GM12878 (cell line): ENCODE measurements at regions of chr15 and their contacts with region 1.

Region 1: DNA sequence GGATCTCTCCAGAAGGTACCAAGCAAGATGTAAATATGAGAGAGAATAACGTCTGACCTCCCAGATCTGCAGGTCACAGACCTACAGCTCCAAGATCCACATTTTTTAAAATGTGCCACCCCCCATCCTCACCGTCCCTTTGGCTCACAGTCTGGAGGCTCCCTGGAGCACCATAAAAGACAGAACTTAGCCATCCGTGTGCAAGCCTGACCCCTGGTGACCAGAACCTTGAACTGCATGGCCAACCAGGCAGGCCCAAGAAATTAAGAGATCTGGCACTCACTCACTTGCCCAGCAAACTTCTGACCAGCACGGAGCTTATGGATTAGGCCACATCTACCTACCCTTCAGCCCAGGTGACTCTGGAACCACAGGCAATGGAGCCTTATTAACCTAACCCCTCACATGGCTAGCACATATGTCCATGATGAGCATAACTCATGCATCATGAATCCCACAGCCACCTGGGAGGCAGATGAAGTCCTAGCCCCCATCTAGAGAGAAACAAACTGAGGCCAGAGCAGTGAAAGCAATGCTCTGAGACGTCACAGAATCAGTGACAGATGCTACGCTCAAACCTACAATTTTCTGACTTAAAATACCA is 275.3 kb downstream of the UACA start:
- DNase-seq: no peak
- ATAC-seq: peak; percentile 4; the same call in 1 of the 3 replicates
- H3K4me3 ChIP-seq: no peak overlapping the region
- H3K27ac ChIP-seq: no peak overlapping the region
- H3K4me1 ChIP-seq: peaks cover 51% of the 10 kb centered on the region
- H3K27me3 ChIP-seq: no peaks in the 10 kb centered on the region; a peak in 1 of 4 replicates
- CTCF ChIP-seq: peak; percentile 94 to 98 (median 96); a peak in 5 of 6 replicates
- EP300 ChIP-seq: no peak
- POLR2A ChIP-seq: no peak
- RAD21 ChIP-seq: peak; percentile 95

Region 2: GRCh38 chr15:69475769-69476358 is 1012.2 kb before region 1 on chr15:
- CTCF ChIA-PET with region 1: interaction called, 8 read pairs
- POLR2A ChIA-PET with region 1: no interaction called
- RAD21 ChIA-PET with region 1: interaction called, 8 read pairs
- SMC1A ChIA-PET with region 1: interaction called, 5 read pairs
- in situ Hi-C with region 1: no loop called
- intact Hi-C with region 1: loop called (anchors 2 kb)
- DNase-seq: no peak
- ATAC-seq: peak; percentile 89
- H3K4me3 ChIP-seq: no peak overlapping the region
- H3K27ac ChIP-seq: no peak overlapping the region
- H3K4me1 ChIP-seq: no peaks in the 10 kb centered on the region
- H3K27me3 ChIP-seq: no peaks in the 10 kb centered on the region
- CTCF ChIP-seq: peak; percentile 95 to 97 (median 97); a peak in 5 of 6 replicates
- EP300 ChIP-seq: no peak
- POLR2A ChIP-seq: no peak
- RAD21 ChIP-seq: peak; percentile 91

Region 3: DNA sequence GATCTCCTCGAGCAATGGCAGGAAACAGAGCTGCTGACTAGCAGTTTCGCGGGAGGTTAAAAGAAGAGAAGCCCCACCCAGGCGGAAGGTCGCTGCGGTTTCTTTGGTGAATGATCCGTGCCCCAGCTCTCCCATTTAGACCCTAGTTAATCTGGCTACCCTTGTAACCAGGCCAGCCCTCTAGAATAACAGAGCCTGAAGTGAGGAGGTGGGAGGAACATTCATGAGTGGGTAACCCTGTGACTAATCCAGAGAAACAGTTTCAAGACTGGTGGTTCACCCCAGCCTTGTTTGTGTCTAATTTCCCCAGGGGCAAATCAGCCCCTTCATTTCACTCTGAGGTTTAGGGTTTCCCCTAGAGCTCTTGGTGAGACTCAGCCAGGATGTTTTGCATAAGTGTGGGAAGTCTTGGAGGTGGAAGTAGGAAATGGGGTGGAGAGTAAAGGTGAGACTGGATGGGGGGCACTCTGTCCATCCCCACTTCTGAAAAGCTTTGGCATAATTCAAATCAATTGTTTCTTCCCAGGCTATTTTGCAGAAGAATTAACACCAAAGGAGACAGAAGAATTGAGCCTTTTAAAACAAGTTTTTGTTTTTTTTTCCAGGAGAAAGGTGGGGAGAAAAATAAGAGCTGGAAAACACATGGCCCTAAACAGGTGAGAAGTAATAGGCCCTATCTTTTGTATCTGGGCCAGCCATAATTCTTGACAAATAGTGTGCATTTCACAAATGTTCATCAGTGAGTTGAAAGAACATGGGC is 732.4 kb before region 1 on chr15:
- CTCF ChIA-PET with region 1: interaction called, 3 read pairs
- POLR2A ChIA-PET with region 1: no interaction called
- RAD21 ChIA-PET with region 1: interaction called, 4 read pairs
- SMC1A ChIA-PET with region 1: interaction called, 3 read pairs
- in situ Hi-C with region 1: loop called (anchors 5 kb)
- intact Hi-C with region 1: loop called (anchors 10 kb)
- DNase-seq: peak; percentile 93
- ATAC-seq: peak; percentile 93
- H3K4me3 ChIP-seq: no peak overlapping the region
- H3K27ac ChIP-seq: no peak overlapping the region
- H3K4me1 ChIP-seq: peaks cover 37% of the 10 kb centered on the region
- H3K27me3 ChIP-seq: no peaks in the 10 kb centered on the region
- CTCF ChIP-seq: no peak
- EP300 ChIP-seq: peak; percentile 77 to 85; a peak in 3 of 4 replicates
- POLR2A ChIP-seq: no peak
- RAD21 ChIP-seq: no peak

Region 4: GRCh38 chr15:70097337-70098169 is 390.6 kb before region 1 on chr15 and contains the start of gene TLE3:
- CTCF ChIA-PET with region 1: interaction called, 4 read pairs
- POLR2A ChIA-PET with region 1: no interaction called
- RAD21 ChIA-PET with region 1: interaction called, 4 read pairs
- SMC1A ChIA-PET with region 1: interaction called, 3 read pairs
- in situ Hi-C with region 1: no loop called
- intact Hi-C with region 1: loop called (anchors 2 kb)
- DNase-seq: peak; percentile 85
- ATAC-seq: peak; percentile 74
- H3K4me3 ChIP-seq: peak within 1 kb of the TSS; percentile 97
- H3K27ac ChIP-seq: peak within 1 kb of the TSS; percentile 79
- H3K4me1 ChIP-seq: peaks cover 25% of the 10 kb centered on the region
- H3K27me3 ChIP-seq: peaks cover 3 to 8% of the 10 kb centered on the region in 2 experiments; a peak in 3 of 4 replicates
- CTCF ChIP-seq: peak; percentile 32 to 61 (median 45); a peak in 5 of 6 replicates
- EP300 ChIP-seq: no peak
- POLR2A ChIP-seq: peak; percentile 90
- RAD21 ChIP-seq: peak; percentile 63
- polyA plus RNA-seq, gene TLE3: 1.2 to 2.2 TPM

Region 5: GRCh38 chr15:70318594-70319465 is 169.3 kb before region 1 on chr15:
- CTCF ChIA-PET with region 1: no interaction called
- POLR2A ChIA-PET with region 1: no interaction called
- RAD21 ChIA-PET with region 1: no interaction called
- SMC1A ChIA-PET with region 1: interaction called, 3 read pairs
- in situ Hi-C with region 1: no loop called
- intact Hi-C with region 1: loop called (anchors 2 kb)
- DNase-seq: no peak
- ATAC-seq: peak; percentile 40; the same call in 2 of the 3 replicates
- H3K4me3 ChIP-seq: peak overlapping the region; percentile 9; the same call in 1 of the 2 replicates
- H3K27ac ChIP-seq: peak overlapping the region; percentile 48
- H3K4me1 ChIP-seq: peaks cover 44% of the 10 kb centered on the region
- H3K27me3 ChIP-seq: no peaks in the 10 kb centered on the region
- CTCF ChIP-seq: no peak
- EP300 ChIP-seq: no peak
- POLR2A ChIP-seq: no peak
- RAD21 ChIP-seq: no peak

Region 6: GRCh38 chr15:70512772-70513362 is 24.8 kb after region 1 on chr15:
- CTCF ChIA-PET with region 1: interaction called, 19 read pairs
- POLR2A ChIA-PET with region 1: no interaction called
- RAD21 ChIA-PET with region 1: interaction called, 5 read pairs
- SMC1A ChIA-PET with region 1: interaction called, 40 read pairs
- in situ Hi-C with region 1: no loop called
- intact Hi-C with region 1: no loop called
- DNase-seq: no peak
- ATAC-seq: peak; percentile 99
- H3K4me3 ChIP-seq: no peak overlapping the region
- H3K27ac ChIP-seq: no peak overlapping the region
- H3K4me1 ChIP-seq: peaks cover 15% of the 10 kb centered on the region
- H3K27me3 ChIP-seq: no peaks in the 10 kb centered on the region; a peak in 1 of 4 replicates
- CTCF ChIP-seq: peak; percentile 96 to 99 (median 98); a peak in 5 of 6 replicates
- EP300 ChIP-seq: no peak
- POLR2A ChIP-seq: no peak
- RAD21 ChIP-seq: peak; percentile 90

Region 7: GRCh38 chr15:70763120-70763878 is 275.2 kb after region 1 on chr15 and contains the start of gene UACA:
- CTCF ChIA-PET with region 1: no interaction called
- POLR2A ChIA-PET with region 1: no interaction called
- RAD21 ChIA-PET with region 1: no interaction called
- SMC1A ChIA-PET with region 1: no interaction called
- in situ Hi-C with region 1: no loop called
- intact Hi-C with region 1: no loop called
- DNase-seq: peak; percentile 60
- ATAC-seq: peak; percentile 97
- H3K4me3 ChIP-seq: peak within 1 kb of the TSS; percentile 66
- H3K27ac ChIP-seq: no peak within 1 kb of the TSS
- H3K4me1 ChIP-seq: peaks cover 3% of the 10 kb centered on the region; the same call in 1 of the 2 replicates
- H3K27me3 ChIP-seq: peaks cover 0 to 5% of the 10 kb centered on the region in 2 experiments; a peak in 2 of 4 replicates
- CTCF ChIP-seq: no peak
- EP300 ChIP-seq: no peak
- POLR2A ChIP-seq: 0 out of 2 replicates have a peak, but pooled peaks have one; percentile 54
- RAD21 ChIP-seq: no peak
- polyA plus RNA-seq, gene UACA: 1.2 to 2.1 TPM